ENCODE measurements at regions of chr9 and their contacts with region 1.

Region 1: GRCh38 chr9:21455320-21455719 is 15.1 kb downstream of the IFNA1 start:
- DNase-seq: no peak
- H3K4me3 ChIP-seq: no peak overlapping the region
- H3K27ac ChIP-seq: no peak overlapping the region
- H3K4me1 ChIP-seq: no peaks in the 10 kb centered on the region
- H3K27me3 ChIP-seq: no peaks in the 10 kb centered on the region
- CTCF ChIP-seq: peak; percentile 69 to 88 (median 81)
- EP300 ChIP-seq: no peak
- POLR2A ChIP-seq: no peak
- RAD21 ChIP-seq: peak; percentile 83 to 92

Region 2: GRCh38 chr9:21239911-21240310 is 215.4 kb before region 1 on chr9 and contains the start of gene IFNA14:
- CTCF ChIA-PET with region 1: interaction called, 13 read pairs
- POLR2A ChIA-PET with region 1: no interaction called
- DNase-seq: no peak
- H3K4me3 ChIP-seq: no peak within 1 kb of the TSS
- H3K27ac ChIP-seq: no peak within 1 kb of the TSS
- H3K4me1 ChIP-seq: no peaks in the 10 kb centered on the region
- H3K27me3 ChIP-seq: no peaks in the 10 kb centered on the region
- CTCF ChIP-seq: no peak
- EP300 ChIP-seq: no peak
- POLR2A ChIP-seq: no peak
- RAD21 ChIP-seq: no peak
- total RNA-seq, gene IFNA14: not detected in 2 replicates

Region 3: GRCh38 chr9:21326526-21327139 is 128.7 kb before region 1 on chr9:
- CTCF ChIA-PET with region 1: interaction called, 11 read pairs
- POLR2A ChIA-PET with region 1: no interaction called
- DNase-seq: no peak
- H3K4me3 ChIP-seq: no peak overlapping the region
- H3K27ac ChIP-seq: no peak overlapping the region
- H3K4me1 ChIP-seq: no peaks in the 10 kb centered on the region
- H3K27me3 ChIP-seq: no peaks in the 10 kb centered on the region
- CTCF ChIP-seq: peak in 2 of 3 experiments; percentile 53 to 62; a peak in 2 of 4 replicates
- EP300 ChIP-seq: no peak
- POLR2A ChIP-seq: no peak
- RAD21 ChIP-seq: peak; percentile 84 to 87

Region 4: GRCh38 chr9:21434202-21435014 is 20.9 kb before region 1 on chr9:
- CTCF ChIA-PET with region 1: interaction called, 36 read pairs
- POLR2A ChIA-PET with region 1: no interaction called
- DNase-seq: peak in 1 of 2 experiments; percentile 66
- H3K4me3 ChIP-seq: no peak overlapping the region
- H3K27ac ChIP-seq: no peak overlapping the region
- H3K4me1 ChIP-seq: no peaks in the 10 kb centered on the region
- H3K27me3 ChIP-seq: no peaks in the 10 kb centered on the region
- CTCF ChIP-seq: peak in 2 of 3 experiments; percentile 47; a peak in 2 of 4 replicates
- EP300 ChIP-seq: no peak
- POLR2A ChIP-seq: no peak
- RAD21 ChIP-seq: peak; percentile 31 to 46; a peak in 3 of 4 replicates

Region 5: GRCh38 chr9:21789541-21790037 is 334.3 kb after region 1 on chr9:
- CTCF ChIA-PET with region 1: interaction called, 13 read pairs
- POLR2A ChIA-PET with region 1: no interaction called
- DNase-seq: no peak
- H3K4me3 ChIP-seq: peak overlapping the region in 1 of 4 experiments; percentile 44; a peak in 1 of 8 replicates
- H3K27ac ChIP-seq: no peak overlapping the region
- H3K4me1 ChIP-seq: no peaks in the 10 kb centered on the region
- H3K27me3 ChIP-seq: 0 out of 7 replicates have a peak, but pooled peaks cover 0 to 2% (median 0%) of the 10 kb centered on the region in 4 experiments
- CTCF ChIP-seq: peak in 2 of 3 experiments; percentile 72 to 80; a peak in 3 of 4 replicates
- EP300 ChIP-seq: no peak
- POLR2A ChIP-seq: no peak
- RAD21 ChIP-seq: peak; percentile 81 to 86

Measured in H1 (cell line).